ENCODE measurements at regions of chr12 and their contacts with region 1.

Region 1: DNA sequence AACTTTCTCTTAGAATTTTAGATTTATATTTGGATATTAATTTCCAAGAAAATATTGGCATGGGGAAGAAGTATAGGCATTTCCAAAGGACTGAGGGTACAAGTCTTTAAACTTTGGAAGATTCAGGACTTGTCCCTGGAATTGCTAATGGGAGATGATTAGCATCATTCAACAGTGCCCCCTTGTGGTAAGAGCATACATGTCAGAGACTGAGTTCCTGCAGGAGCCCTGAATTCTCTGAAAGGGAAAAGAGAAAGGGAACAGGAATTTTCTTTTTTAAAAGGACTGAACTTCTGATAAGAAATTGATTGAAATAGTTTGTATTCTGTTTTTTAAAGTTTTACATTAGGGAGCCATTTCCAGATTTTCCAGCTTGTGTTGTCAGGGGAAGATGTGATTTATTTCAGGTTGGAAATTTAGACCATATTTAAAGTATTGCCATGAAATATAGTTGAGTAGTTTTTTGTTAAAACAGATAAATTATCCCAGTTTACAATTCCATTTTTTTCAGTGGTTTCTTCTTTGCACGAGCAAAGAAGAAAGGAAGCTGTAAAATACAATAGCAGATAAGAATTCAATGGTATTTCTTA is 44.0 kb upstream of the REP15 start:
- DNase-seq: peak in 2 of 4 donors; percentile 67 to 85
- ATAC-seq: peak; percentile 93
- H3K4me3 ChIP-seq: no peak overlapping the region
- H3K27ac ChIP-seq: peak overlapping the region in 1 of 2 donors; percentile 2
- H3K4me1 ChIP-seq: no peaks in the 10 kb centered on the region
- H3K27me3 ChIP-seq: no peaks in the 10 kb centered on the region
- CTCF ChIP-seq: peak; percentile 71 to 77

Region 2: GRCh38 chr12:27434673-27435565 is 217.3 kb before region 1 on chr12:
- intact Hi-C with region 1: loop called in 1 of 2 experiments (anchors 10 kb)
- DNase-seq: no peak
- ATAC-seq: peak; percentile 79
- H3K4me3 ChIP-seq: no peak overlapping the region
- H3K27ac ChIP-seq: no peak overlapping the region
- H3K4me1 ChIP-seq: peaks cover 0 to 3% of the 10 kb centered on the region in 2 donors
- H3K27me3 ChIP-seq: no peaks in the 10 kb centered on the region
- CTCF ChIP-seq: peak; percentile 41 to 61

Region 3: DNA sequence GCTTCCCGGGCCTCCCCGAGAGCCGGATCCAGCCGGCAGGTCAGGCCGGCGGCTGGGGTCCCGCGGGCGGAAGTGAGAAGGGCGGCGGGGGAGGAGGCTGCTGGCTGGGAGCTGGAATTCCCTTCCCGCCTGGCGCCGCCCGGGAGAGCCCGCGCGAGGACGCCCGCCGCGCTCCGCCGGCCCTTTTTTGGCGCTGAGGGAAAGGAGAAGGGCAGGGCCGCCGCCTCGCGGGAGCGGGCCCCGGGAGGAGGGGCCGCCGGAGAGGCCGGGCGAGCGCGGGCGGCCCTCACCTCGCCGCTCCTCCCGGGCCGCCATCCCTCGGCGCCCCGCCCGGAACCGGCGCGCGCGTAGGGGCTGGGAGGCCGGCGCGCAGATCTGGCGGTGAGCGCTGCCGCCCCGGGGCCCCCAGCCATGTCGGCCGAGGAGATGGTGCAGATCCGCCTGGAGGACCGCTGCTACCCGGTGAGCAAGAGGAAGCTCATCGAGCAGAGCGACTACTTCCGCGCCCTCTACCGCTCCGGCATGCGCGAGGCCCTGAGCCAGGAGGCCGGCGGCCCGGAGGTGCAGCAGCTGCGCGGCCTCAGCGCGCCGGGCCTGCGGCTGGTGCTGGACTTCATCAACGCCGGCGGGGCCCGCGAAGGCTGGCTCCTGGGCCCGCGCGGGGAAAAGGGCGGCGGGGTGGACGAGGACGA is 127.8 kb after region 1 on chr12 and contains the starts of genes KLHL42 and MANSC4:
- intact Hi-C with region 1: no loop called
- DNase-seq: peak; percentile 71 to 94 (median 78)
- ATAC-seq: peak; percentile 90
- H3K4me3 ChIP-seq: peak within 1 kb of the TSS; percentile 70 to 81
- H3K27ac ChIP-seq: peak within 1 kb of the TSS; percentile 84 to 86
- H3K4me1 ChIP-seq: peaks cover 13 to 35% of the 10 kb centered on the region in 2 donors
- H3K27me3 ChIP-seq: no peaks in the 10 kb centered on the region
- CTCF ChIP-seq: no peak
- polyA plus RNA-seq, gene KLHL42: 33.4 to 39.9 (median 35.4) TPM
- polyA plus RNA-seq, gene MANSC4: 0.15 to 0.58 (median 0.37) TPM

Measured in left lung (tissue), 14 donors.